ENCODE measurements at regions of chr1 and their contacts with region 1.

Region 1: GRCh38 chr1:26913754-26914619 is at the start of gene NR0B2:
- DNase-seq: peak; percentile 100
- ATAC-seq: peak; percentile 84
- H3K4me3 ChIP-seq: peak within 1 kb of the TSS; percentile 75 to 97 (median 92)
- H3K27ac ChIP-seq: peak within 1 kb of the TSS; percentile 96
- H3K4me1 ChIP-seq: peaks cover 56% of the 10 kb centered on the region
- H3K27me3 ChIP-seq: no peaks in the 10 kb centered on the region; a peak in 1 of 5 replicates
- CTCF ChIP-seq: peak; percentile 41
- EP300 ChIP-seq: peak; percentile 79 to 96
- POLR2A ChIP-seq: peak; percentile 100
- RAD21 ChIP-seq: peak; percentile 29
- total RNA-seq, gene NR0B2: 71.6 and 72.5 TPM in 2 replicates

Region 2: GRCh38 chr1:26516987-26517765 is 396.8 kb before region 1 on chr1:
- CTCF ChIA-PET with region 1: no interaction called
- POLR2A ChIA-PET with region 1: no interaction called
- in situ Hi-C with region 1: no loop called
- intact Hi-C with region 1: no loop called
- DNase-seq: no peak
- ATAC-seq: no peak
- H3K4me3 ChIP-seq: no peak overlapping the region
- H3K27ac ChIP-seq: no peak overlapping the region
- H3K4me1 ChIP-seq: 0 out of 2 replicates have a peak, but pooled peaks cover 6% of the 10 kb centered on the region
- H3K27me3 ChIP-seq: peaks cover 0 to 7% of the 10 kb centered on the region in 2 experiments; a peak in 3 of 5 replicates
- CTCF ChIP-seq: no peak
- EP300 ChIP-seq: no peak
- POLR2A ChIP-seq: no peak
- RAD21 ChIP-seq: no peak

Region 3: GRCh38 chr1:26882696-26883463 is 31.1 kb before region 1 on chr1:
- CTCF ChIA-PET with region 1: no interaction called
- POLR2A ChIA-PET with region 1: interaction called, 23 read pairs
- in situ Hi-C with region 1: no loop called
- intact Hi-C with region 1: no loop called
- DNase-seq: no peak
- ATAC-seq: peak; percentile 48
- H3K4me3 ChIP-seq: no peak overlapping the region
- H3K27ac ChIP-seq: peak overlapping the region; percentile 14
- H3K4me1 ChIP-seq: peaks cover 37% of the 10 kb centered on the region
- H3K27me3 ChIP-seq: no peaks in the 10 kb centered on the region
- CTCF ChIP-seq: no peak
- EP300 ChIP-seq: no peak
- POLR2A ChIP-seq: no peak
- RAD21 ChIP-seq: no peak

Region 4: DNA sequence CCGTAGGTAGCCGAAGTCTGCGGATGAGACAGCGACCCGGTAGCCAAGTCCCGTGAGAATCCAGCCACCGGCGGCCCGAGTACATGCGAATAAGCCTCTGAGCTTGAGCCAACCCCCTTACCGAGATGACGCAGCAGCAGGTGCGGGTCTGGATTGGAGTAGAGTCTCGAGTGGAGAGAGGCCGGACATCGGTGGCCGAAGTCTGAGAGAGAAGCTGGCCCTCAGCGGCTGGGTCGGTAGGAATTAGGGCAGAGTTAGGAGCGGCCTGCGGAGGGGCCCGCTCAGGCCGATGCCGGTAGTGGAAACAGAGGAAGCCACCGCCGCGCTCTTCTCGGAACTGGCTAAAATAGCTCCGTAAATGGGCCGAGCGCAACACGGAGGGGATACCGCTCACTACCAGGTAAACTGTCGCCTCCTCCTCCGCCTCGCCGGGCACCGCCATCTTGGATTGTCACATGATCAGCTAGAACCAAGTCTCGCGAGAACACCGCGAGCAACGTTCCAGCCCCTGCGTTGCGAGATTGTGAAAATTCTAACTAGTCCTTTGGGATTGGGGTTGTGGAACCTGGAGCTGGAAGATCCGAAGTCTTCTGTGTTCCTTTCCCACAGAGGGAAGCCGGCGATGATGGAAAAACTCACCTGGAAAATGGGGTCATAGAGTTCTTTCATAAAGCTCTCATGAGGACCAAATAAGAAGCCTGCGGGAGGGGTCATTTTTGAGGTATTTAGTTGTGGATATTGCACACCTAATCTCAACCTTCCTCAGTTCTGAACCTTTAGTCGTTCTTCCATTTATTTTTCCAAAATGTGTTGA is 13.8 kb before region 1 on chr1 and contains the start of gene GPATCH3:
- CTCF ChIA-PET with region 1: no interaction called
- POLR2A ChIA-PET with region 1: interaction called, 152 read pairs
- in situ Hi-C with region 1: no loop called
- intact Hi-C with region 1: no loop called
- DNase-seq: peak; percentile 88
- ATAC-seq: peak; percentile 89
- H3K4me3 ChIP-seq: peak within 1 kb of the TSS; percentile 76 to 94 (median 89)
- H3K27ac ChIP-seq: peak within 1 kb of the TSS; percentile 89
- H3K4me1 ChIP-seq: peaks cover 47% of the 10 kb centered on the region
- H3K27me3 ChIP-seq: no peaks in the 10 kb centered on the region; a peak in 1 of 5 replicates
- CTCF ChIP-seq: no peak
- EP300 ChIP-seq: peak in 1 of 2 experiments; percentile 36; a peak in 1 of 4 replicates
- POLR2A ChIP-seq: peak; percentile 79 to 98
- RAD21 ChIP-seq: no peak; the same call in none of the 2 replicates
- total RNA-seq, gene GPATCH3: 11.0 and 12.5 TPM in 2 replicates

Region 5: DNA sequence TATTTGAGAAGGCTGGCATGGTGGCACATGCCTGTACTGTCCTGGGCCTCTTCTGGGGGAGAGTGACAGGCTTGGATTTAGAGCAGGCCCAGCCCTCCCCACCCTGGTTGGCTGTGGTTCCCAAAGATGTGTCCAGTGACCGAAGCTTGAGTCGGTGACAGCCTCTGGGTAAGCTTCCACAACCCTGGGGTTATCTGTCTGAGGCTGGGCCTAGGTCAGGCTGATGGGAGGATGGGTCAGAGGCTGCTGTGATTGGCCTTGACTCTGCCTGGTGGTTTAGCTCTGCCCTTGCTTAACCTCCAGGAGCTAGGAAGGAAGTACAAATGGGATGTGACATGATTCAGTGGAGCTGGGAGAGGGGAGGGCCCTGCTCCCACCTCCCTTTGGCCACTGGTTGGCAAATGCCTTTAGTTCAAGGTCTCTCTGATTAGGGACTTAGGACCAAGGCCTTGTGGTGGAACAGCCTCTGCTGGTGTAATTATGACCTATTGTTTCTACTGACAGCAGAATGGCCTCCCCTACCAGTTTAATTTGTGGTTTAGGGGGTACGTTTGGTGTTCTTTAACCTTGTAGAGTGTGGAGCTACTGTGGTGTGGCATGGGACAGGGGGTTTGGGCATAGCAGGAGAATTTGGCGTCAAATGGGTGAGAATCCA is 24.1 kb after region 1 on chr1:
- CTCF ChIA-PET with region 1: interaction called, 3 read pairs
- POLR2A ChIA-PET with region 1: interaction called, 371 read pairs
- in situ Hi-C with region 1: no loop called
- intact Hi-C with region 1: loop called (anchors 2 kb)
- DNase-seq: peak; percentile 98
- ATAC-seq: peak; percentile 97
- H3K4me3 ChIP-seq: peak overlapping the region in 1 of 3 experiments; percentile 19; a peak in 2 of 6 replicates
- H3K27ac ChIP-seq: peak overlapping the region; percentile 84
- H3K4me1 ChIP-seq: peaks cover 51% of the 10 kb centered on the region
- H3K27me3 ChIP-seq: no peaks in the 10 kb centered on the region
- CTCF ChIP-seq: peak; percentile 48
- EP300 ChIP-seq: peak in 1 of 2 experiments; percentile 88; a peak in 2 of 4 replicates
- POLR2A ChIP-seq: peak; percentile 25 to 51; a peak in 2 of 4 replicates
- RAD21 ChIP-seq: no peak; the same call in 1 of the 2 replicates

Region 6: DNA sequence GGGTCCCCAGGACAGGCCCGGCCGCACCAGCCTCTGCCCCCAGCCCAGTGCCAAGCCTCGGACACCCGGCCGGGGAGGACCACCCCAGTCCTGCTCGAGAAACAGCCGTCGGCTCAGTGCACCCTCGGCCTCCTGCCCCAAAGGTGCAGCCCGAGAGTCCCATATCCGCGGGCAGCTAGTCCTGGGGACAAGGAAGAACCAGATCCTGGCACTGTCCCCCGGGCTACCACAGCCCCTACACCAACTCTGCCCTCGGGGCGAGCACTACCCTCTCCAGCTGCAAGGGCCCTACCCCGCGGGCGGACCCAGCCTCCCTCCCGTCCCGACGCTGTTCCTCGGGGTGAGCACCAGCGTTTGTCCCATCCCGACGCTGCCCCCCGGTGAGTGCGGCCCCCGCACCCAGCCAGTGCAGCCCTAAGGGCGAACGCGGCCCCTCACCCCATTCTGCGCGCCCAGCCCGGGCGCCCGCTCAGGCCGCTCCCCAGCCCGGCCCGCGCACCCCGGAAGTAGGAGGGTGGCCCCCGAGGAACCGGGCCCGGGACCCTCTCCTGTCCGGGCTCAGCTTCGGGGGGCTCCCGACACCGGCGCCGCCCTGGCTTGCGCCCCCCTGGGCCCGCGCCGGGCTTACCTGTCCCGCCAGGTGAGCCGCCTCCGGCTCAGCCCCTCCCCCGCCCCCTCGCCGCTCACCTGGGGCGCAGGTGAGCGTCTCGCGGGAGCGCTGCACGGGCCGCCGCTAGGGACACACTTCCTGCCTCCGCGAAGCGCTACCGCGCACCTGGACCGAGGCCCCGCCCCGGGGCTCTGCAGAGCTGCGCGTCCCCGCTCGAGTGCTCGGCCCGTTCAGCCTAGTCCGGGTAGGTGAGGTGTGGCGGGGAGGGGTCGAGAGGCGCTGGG is 46.0 kb after region 1 on chr1 and contains the start of gene KDF1:
- CTCF ChIA-PET with region 1: no interaction called
- POLR2A ChIA-PET with region 1: interaction called, 61 read pairs
- in situ Hi-C with region 1: no loop called
- intact Hi-C with region 1: no loop called
- DNase-seq: no peak
- ATAC-seq: peak; percentile 76
- H3K4me3 ChIP-seq: peak within 1 kb of the TSS; percentile 82 to 93 (median 88)
- H3K27ac ChIP-seq: peak within 1 kb of the TSS; percentile 6
- H3K4me1 ChIP-seq: peaks cover 66% of the 10 kb centered on the region
- H3K27me3 ChIP-seq: no peaks in the 10 kb centered on the region; a peak in 1 of 5 replicates
- CTCF ChIP-seq: peak; percentile 48; the same call in 1 of the 2 replicates
- EP300 ChIP-seq: no peak
- POLR2A ChIP-seq: 0 out of 4 replicates have a peak, but pooled peaks of 1 of the 2 experiments have one; percentile 11
- RAD21 ChIP-seq: no peak; the same call in 1 of the 2 replicates
- total RNA-seq, gene KDF1: 1.9 and 2.4 TPM in 2 replicates

Region 7: GRCh38 chr1:26993237-26994019 is 79.4 kb after region 1 on chr1 and contains the start of gene TRNP1:
- CTCF ChIA-PET with region 1: no interaction called
- POLR2A ChIA-PET with region 1: interaction called, 129 read pairs
- in situ Hi-C with region 1: loop called (anchors 5 kb)
- intact Hi-C with region 1: loop called (anchors 1 kb)
- DNase-seq: peak; percentile 88
- ATAC-seq: peak; percentile 54
- H3K4me3 ChIP-seq: peak within 1 kb of the TSS; percentile 92 to 97 (median 96)
- H3K27ac ChIP-seq: peak within 1 kb of the TSS; percentile 100
- H3K4me1 ChIP-seq: peaks cover 72% of the 10 kb centered on the region
- H3K27me3 ChIP-seq: no peaks in the 10 kb centered on the region; a peak in 1 of 5 replicates
- CTCF ChIP-seq: peak; percentile 43
- EP300 ChIP-seq: peak in 1 of 2 experiments; percentile 74; a peak in 2 of 4 replicates
- POLR2A ChIP-seq: peak in 1 of 2 experiments; percentile 97; a peak in 2 of 4 replicates
- RAD21 ChIP-seq: peak; percentile 68
- total RNA-seq, gene TRNP1: 35.6 and 42.0 TPM in 2 replicates